Endothelial cell of umbilical vein (primary cell): ENCODE measurements at regions of chr3 and their contacts with region 1.

Region 1: DNA sequence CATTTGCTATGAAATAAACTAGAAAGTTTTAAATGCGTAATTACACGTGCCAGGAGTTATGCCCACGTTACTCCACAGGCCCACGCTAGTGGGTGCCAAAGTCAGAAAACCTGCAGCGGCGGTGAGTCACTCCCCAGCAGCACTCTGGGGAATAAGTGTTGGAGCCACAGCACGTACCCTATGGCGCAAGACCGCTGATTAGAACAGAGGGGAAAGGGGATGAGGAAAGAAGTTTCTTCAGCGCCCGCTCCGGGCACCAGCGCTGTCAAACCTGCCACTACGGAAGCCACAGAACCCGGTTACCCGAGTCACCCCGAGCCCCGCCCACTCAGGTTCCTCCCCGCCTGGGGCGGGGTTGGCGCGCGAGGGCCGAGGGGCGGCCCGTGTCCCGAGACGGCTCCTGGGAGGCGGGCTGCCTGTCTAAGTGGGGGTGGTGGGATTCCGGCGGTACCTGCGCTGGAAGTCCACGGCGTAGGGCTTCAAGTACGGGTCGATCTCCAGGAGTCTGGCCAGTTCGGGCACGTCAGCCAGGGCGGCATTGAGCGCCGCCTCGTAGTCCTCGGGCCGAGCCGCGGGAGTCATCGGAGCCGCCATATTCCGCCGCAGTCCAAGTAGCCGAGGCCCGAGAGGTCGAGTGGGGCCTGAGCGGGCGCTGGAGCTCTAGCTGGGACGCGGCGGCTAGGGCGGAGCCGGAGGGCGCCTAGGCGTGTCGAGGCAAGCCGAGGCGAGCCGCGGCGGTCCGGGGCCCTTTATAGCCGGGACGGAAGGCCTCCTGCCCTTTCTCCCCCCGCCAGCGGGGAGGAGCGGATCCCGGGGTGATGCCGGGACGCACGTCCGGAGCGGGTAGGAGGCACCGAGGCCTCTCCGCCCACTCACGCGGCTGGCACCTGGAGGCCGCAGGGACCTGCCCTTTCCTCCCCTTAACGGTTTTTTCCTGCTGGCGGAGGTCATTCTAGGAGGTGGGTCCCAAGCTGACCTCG is at the start of gene GBE1:
- DNase-seq: peak; percentile 90
- H3K4me3 ChIP-seq: peak within 1 kb of the TSS; percentile 77 to 95 (median 83)
- H3K27ac ChIP-seq: peak within 1 kb of the TSS; percentile 96
- H3K4me1 ChIP-seq: peaks cover 24% of the 10 kb centered on the region
- H3K27me3 ChIP-seq: no peaks in the 10 kb centered on the region
- CTCF ChIP-seq: peak; percentile 32 to 37
- POLR2A ChIP-seq: peak; percentile 93
- total RNA-seq, gene GBE1: 107 and 110 TPM in 2 replicates

Region 2: GRCh38 chr3:81476692-81477091 is 284.5 kb before region 1 on chr3:
- CTCF ChIA-PET with region 1: no interaction called
- POLR2A ChIA-PET with region 1: no interaction called
- dilution Hi-C with region 1: no loop called
- intact Hi-C with region 1: loop called (anchors 10 kb)
- DNase-seq: no peak
- H3K4me3 ChIP-seq: no peak overlapping the region
- H3K27ac ChIP-seq: no peak overlapping the region
- H3K4me1 ChIP-seq: peaks cover 26% of the 10 kb centered on the region
- H3K27me3 ChIP-seq: no peaks in the 10 kb centered on the region
- CTCF ChIP-seq: no peak
- POLR2A ChIP-seq: no peak

Region 3: GRCh38 chr3:81723732-81724313 is 37.4 kb before region 1 on chr3:
- CTCF ChIA-PET with region 1: interaction called, 4 read pairs
- POLR2A ChIA-PET with region 1: interaction called, 3 read pairs
- dilution Hi-C with region 1: no loop called
- intact Hi-C with region 1: loop called (anchors 1 kb)
- DNase-seq: peak; percentile 78
- H3K4me3 ChIP-seq: no peak overlapping the region
- H3K27ac ChIP-seq: peak overlapping the region; percentile 84
- H3K4me1 ChIP-seq: peaks cover 50% of the 10 kb centered on the region
- H3K27me3 ChIP-seq: no peaks in the 10 kb centered on the region
- CTCF ChIP-seq: no peak
- POLR2A ChIP-seq: no peak

Region 4: DNA sequence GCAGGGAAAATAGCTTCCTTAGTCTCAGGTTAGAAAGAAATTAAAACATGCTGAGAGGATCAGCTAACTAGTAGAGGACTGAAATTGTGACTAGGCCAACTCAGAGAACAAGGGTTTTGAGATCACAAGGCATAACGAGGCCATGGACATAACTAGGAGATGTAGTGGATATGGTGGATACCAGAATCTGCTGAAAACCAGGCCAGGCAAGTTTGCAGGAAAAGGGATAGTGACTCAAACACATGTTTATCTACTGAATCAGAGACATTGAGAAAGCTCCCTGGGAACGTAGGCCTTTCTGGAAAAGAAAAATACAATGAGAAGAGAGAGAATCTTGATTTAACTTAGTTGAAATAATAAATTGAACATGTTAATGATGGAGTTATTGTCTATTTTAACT is 326.7 kb after region 1 on chr3:
- CTCF ChIA-PET with region 1: no interaction called
- POLR2A ChIA-PET with region 1: no interaction called
- dilution Hi-C with region 1: no loop called
- intact Hi-C with region 1: loop called (anchors 1 kb)
- DNase-seq: peak; percentile 82
- H3K4me3 ChIP-seq: no peak overlapping the region
- H3K27ac ChIP-seq: peak overlapping the region; percentile 70
- H3K4me1 ChIP-seq: peaks cover 45% of the 10 kb centered on the region
- H3K27me3 ChIP-seq: no peaks in the 10 kb centered on the region
- CTCF ChIP-seq: no peak
- POLR2A ChIP-seq: no peak